PC-9 (cell line): ENCODE measurements at regions of chr1 and their contacts with region 1.

Region 1: GRCh38 chr1:61077676-61078541 is 4.5 kb upstream of the NFIA start:
- DNase-seq: peak; percentile 92 to 99
- H3K4me3 ChIP-seq: peak overlapping the region; percentile 68
- H3K27ac ChIP-seq: peak overlapping the region; percentile 67
- H3K4me1 ChIP-seq: peaks cover 51% of the 10 kb centered on the region
- H3K27me3 ChIP-seq: no peaks in the 10 kb centered on the region
- CTCF ChIP-seq: no peak

Region 2: DNA sequence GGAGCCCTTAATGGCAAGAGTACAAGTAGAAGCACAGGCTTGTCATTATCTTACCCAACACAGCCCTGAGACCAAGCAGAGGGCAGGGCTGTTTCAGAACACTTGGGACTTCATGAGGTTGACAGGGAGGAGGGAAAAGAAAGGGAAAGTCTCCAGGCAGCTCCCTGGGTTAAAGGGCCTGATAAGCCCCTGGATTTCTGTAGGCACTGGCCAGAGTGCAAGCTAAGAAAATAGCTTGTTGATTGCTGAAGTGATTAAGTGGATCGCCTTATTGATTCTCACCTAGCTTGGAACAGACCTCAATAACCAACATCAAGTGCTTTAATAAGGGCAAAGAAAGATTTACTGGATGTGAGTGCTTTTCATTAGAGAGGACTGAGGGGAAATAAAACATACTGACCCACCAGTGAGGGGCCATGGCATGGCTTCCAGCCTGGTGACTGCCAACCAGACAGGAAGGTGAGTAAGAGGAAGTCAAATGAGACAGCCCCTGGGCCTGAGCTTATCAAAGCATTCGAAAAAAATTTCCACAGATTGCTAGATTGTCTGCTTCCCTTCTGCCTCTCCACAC is 116.9 kb before region 1 on chr1:
- CTCF ChIA-PET with region 1: no interaction called
- POLR2A ChIA-PET with region 1: no interaction called
- intact Hi-C with region 1: no loop called
- DNase-seq: no peak
- H3K4me3 ChIP-seq: no peak overlapping the region
- H3K27ac ChIP-seq: no peak overlapping the region
- H3K4me1 ChIP-seq: peaks cover 4% of the 10 kb centered on the region; the same call in 1 of the 2 replicates
- H3K27me3 ChIP-seq: no peaks in the 10 kb centered on the region
- CTCF ChIP-seq: no peak

Region 3: DNA sequence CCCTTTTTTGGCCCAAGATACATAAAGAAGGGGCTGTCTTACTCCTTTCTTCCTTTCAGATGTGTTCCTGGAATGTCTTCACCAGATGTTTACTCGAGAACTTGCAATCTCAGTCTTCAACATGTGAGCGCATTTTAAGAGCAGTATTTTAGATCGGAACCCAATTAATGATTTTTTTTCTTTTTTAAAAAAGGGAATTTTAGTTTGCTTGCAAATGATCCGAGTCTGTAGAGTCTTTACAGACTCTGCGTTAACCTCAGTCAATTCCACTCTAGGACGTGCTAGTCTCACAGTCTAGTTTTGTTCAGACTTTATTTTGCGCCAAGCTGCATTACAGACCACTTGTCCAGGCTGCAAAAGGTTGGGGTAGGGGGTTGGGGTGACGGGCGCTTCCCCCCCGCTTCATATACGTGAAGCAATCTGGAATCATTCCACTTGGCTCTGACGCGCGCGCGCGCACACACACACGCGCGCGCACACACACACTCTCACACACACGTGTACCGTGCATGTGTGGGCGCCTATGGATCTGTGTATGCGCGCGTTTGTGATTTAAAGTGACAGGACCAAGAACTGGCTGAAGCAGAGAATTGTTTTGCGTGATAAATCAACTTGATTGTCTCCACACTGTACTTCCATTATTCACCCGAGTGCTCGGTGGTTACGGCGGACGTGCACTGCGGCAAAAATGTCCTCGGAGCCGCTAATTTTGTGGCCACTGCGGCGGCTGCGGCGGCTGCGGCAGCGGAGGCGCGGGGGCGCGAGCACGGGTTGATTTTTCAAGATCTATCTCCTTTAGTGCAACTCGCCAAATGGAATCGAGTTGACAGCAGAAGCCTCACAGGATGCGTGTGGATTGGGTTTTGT is 21.1 kb before region 1 on chr1:
- CTCF ChIA-PET with region 1: interaction called, 13 read pairs
- POLR2A ChIA-PET with region 1: no interaction called
- intact Hi-C with region 1: loop called (anchors 1 kb)
- DNase-seq: peak; percentile 38 to 45
- H3K4me3 ChIP-seq: peak overlapping the region; percentile 89
- H3K27ac ChIP-seq: peak overlapping the region; percentile 57; the same call in 1 of the 2 replicates
- H3K4me1 ChIP-seq: peaks cover 18% of the 10 kb centered on the region
- H3K27me3 ChIP-seq: no peaks in the 10 kb centered on the region
- CTCF ChIP-seq: no peak

Region 4: GRCh38 chr1:61141288-61142042 is 63.6 kb after region 1 on chr1:
- CTCF ChIA-PET with region 1: no interaction called
- POLR2A ChIA-PET with region 1: interaction called, 3 read pairs
- intact Hi-C with region 1: loop called (anchors 1 kb)
- DNase-seq: peak; percentile 35 to 93
- H3K4me3 ChIP-seq: peak overlapping the region; percentile 16; the same call in 1 of the 2 replicates
- H3K27ac ChIP-seq: peak overlapping the region; percentile 89
- H3K4me1 ChIP-seq: peaks cover 59% of the 10 kb centered on the region
- H3K27me3 ChIP-seq: no peaks in the 10 kb centered on the region
- CTCF ChIP-seq: no peak

Region 5: GRCh38 chr1:61184040-61184713 is 106.3 kb after region 1 on chr1:
- CTCF ChIA-PET with region 1: interaction called, 11 read pairs
- POLR2A ChIA-PET with region 1: no interaction called
- intact Hi-C with region 1: loop called (anchors 5 kb)
- DNase-seq: peak; percentile 68 to 86
- H3K4me3 ChIP-seq: no peak overlapping the region; the same call in 1 of the 2 replicates
- H3K27ac ChIP-seq: peak overlapping the region; percentile 30
- H3K4me1 ChIP-seq: peaks cover 12% of the 10 kb centered on the region
- H3K27me3 ChIP-seq: no peaks in the 10 kb centered on the region
- CTCF ChIP-seq: no peak

Region 6: DNA sequence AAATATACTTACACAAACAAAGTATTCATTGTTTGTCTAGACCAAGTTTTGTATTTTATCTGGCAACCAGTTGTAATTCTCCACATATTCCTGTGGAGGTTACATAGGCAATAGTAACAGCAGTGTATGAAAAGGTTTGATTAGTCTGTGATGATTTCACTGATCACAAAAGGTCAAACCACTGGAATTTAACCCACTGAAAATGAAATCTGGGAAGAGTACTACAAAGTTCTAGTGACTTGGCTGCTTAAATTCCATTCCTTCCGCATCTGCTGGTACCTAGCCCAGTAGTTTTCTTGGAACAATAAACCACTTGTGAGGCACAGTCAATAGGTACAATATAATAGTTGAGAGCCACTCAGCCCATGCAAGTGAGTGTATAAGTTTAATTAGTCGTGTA is 209.8 kb after region 1 on chr1:
- CTCF ChIA-PET with region 1: interaction called, 3 read pairs
- POLR2A ChIA-PET with region 1: interaction called, 12 read pairs
- intact Hi-C with region 1: loop called (anchors 5 kb)
- DNase-seq: peak in 1 of 2 experiments; percentile 60
- H3K4me3 ChIP-seq: no peak overlapping the region
- H3K27ac ChIP-seq: peak overlapping the region; percentile 17; the same call in 1 of the 2 replicates
- H3K4me1 ChIP-seq: peaks cover 42% of the 10 kb centered on the region
- H3K27me3 ChIP-seq: no peaks in the 10 kb centered on the region
- CTCF ChIP-seq: no peak

Region 7: DNA sequence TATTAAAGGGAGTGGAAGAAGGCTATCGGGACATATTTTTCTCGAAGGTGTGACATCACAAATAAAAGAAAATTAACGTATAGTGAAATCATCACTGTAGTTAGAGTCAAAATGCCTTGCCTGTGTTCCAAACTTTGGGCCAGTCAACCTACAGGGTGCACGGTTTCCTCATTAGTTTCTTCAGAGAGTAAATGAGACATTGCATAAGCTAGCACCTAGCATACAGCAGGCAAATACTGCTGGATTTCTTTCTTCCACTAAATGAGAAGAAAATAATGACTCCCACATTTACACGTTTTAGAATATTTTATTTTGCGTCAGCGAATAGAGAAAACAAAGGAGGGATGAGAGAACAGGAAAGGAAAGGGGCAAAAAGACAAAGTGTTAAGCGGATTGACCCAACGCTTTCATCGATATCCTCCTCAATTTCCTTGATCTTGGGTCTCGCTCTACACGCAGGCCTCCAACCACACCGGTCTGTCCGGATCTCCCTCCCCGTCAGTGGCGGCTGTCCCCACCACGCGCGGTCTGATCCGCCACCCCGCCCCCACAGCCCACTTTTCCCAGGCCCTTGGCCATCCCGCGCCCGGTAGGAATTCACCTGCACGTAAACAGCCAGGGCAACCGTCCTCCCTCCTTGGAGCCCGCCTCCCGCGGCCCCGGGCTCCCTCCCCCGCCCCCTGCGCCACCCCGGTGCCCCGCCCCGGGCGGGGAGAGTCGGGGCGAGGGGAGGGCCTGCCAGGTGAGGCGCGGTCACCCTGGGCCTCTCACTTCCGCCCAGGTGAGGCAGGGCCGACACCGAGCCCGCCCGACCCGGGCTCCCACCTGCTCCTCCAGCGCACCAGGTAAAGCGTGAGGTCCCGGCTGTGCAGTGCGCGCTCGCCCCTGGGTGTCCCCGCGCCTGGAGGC is 664.1 kb after region 1 on chr1 and contains the start of gene PATJ:
- CTCF ChIA-PET with region 1: no interaction called
- POLR2A ChIA-PET with region 1: no interaction called
- intact Hi-C with region 1: loop called (anchors 5 kb)
- DNase-seq: peak; percentile 80 to 95
- H3K4me3 ChIP-seq: peak within 1 kb of the TSS; percentile 99
- H3K27ac ChIP-seq: peak within 1 kb of the TSS; percentile 82
- H3K4me1 ChIP-seq: peaks cover 47% of the 10 kb centered on the region
- H3K27me3 ChIP-seq: no peaks in the 10 kb centered on the region
- CTCF ChIP-seq: no peak
- total RNA-seq, gene PATJ: 86.8 and 91.0 TPM in 2 replicates

Region 8: GRCh38 chr1:61749574-61749973 is 671.7 kb after region 1 on chr1:
- CTCF ChIA-PET with region 1: no interaction called
- POLR2A ChIA-PET with region 1: interaction called, 11 read pairs
- intact Hi-C with region 1: loop called (anchors 5 kb)
- DNase-seq: no peak
- H3K4me3 ChIP-seq: no peak overlapping the region
- H3K27ac ChIP-seq: no peak overlapping the region
- H3K4me1 ChIP-seq: peaks cover 43% of the 10 kb centered on the region
- H3K27me3 ChIP-seq: no peaks in the 10 kb centered on the region
- CTCF ChIP-seq: no peak